Mammary epithelial cell (primary cell): ENCODE measurements at regions of chr1 and their contacts with region 1.

Region 1: DNA sequence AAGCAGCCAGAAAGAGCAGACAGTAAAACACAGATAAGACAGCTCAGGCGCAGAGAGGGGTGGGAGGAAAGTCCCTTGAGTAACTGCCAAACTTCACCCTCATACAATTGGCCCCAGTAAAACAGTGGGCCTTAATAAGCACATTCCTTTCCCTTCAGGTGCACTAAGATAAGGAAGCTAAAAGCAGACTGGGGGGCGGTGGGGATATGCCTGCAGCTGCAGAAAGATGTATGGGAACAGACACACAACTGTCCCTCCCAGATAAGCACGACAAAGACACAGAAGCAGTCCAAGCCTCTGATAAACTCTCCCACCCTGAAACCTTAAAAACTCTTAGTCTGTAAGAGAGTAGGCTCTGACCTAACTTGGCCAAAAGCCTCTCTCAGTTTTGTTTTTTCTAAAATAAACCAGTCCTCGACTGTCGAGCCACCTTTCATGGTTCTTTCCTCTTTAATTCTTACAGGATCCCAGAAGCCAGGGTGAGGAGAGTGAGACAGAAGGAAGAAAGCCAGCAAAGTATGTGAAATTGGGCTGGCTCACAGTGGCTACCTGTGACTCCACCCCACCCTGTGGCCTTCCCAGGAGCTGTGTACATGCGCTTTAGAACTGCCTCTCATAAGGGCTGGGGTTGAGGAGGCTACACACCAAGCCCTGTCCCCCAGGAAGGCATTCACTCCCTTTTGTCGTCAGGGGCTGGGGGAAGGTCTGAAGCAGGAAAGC is 4.7 kb downstream of the PGLYRP4 start:
- DNase-seq: no peak
- H3K4me3 ChIP-seq: no peak overlapping the region
- H3K27ac ChIP-seq: no peak overlapping the region
- H3K4me1 ChIP-seq: peaks cover 14% of the 10 kb centered on the region
- H3K27me3 ChIP-seq: no peaks in the 10 kb centered on the region
- CTCF ChIP-seq: no peak

Region 2: GRCh38 chr1:152968248-152968647 is 375.7 kb before region 1 on chr1:
- CTCF ChIA-PET with region 1: no interaction called
- dilution Hi-C with region 1: no loop called
- in situ Hi-C with region 1: no loop called
- intact Hi-C with region 1: no loop called
- DNase-seq: no peak
- H3K4me3 ChIP-seq: no peak overlapping the region
- H3K27ac ChIP-seq: no peak overlapping the region
- H3K4me1 ChIP-seq: peaks cover 38% of the 10 kb centered on the region
- H3K27me3 ChIP-seq: no peaks in the 10 kb centered on the region
- CTCF ChIP-seq: no peak

Region 3: DNA sequence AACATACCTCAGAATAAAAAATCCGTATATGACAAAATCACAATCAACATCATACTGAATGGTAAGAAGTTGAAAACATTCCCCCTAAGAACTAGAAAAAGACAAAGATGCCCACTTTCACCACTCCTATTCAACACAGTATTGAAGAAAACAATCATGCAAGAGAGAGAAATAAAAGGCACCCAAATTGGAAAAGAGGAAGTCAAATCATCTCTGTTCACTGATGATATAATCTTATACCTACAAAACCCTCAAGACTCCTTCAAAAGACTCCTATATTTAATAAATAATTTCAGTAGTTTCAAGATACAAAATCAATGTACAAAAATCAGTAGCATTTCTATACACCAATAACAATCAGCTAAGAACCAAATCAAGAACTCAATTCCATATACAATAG is 10.1 kb before region 1 on chr1:
- CTCF ChIA-PET with region 1: no interaction called
- dilution Hi-C with region 1: no loop called
- in situ Hi-C with region 1: no loop called
- intact Hi-C with region 1: loop called (anchors 1 kb)
- DNase-seq: no peak
- H3K4me3 ChIP-seq: no peak overlapping the region
- H3K27ac ChIP-seq: no peak overlapping the region
- H3K4me1 ChIP-seq: no peaks in the 10 kb centered on the region
- H3K27me3 ChIP-seq: peaks cover 5% of the 10 kb centered on the region
- CTCF ChIP-seq: no peak

Region 4: GRCh38 chr1:154304664-154305337 is 960.8 kb after region 1 on chr1:
- CTCF ChIA-PET with region 1: interaction called, 13 read pairs
- dilution Hi-C with region 1: no loop called
- in situ Hi-C with region 1: no loop called
- intact Hi-C with region 1: no loop called
- DNase-seq: peak; percentile 40
- H3K4me3 ChIP-seq: no peak overlapping the region
- H3K27ac ChIP-seq: no peak overlapping the region
- H3K4me1 ChIP-seq: no peaks in the 10 kb centered on the region
- H3K27me3 ChIP-seq: no peaks in the 10 kb centered on the region
- CTCF ChIP-seq: no peak